ENCODE measurements at regions of chr10 and their contacts with region 1.

Region 1: DNA sequence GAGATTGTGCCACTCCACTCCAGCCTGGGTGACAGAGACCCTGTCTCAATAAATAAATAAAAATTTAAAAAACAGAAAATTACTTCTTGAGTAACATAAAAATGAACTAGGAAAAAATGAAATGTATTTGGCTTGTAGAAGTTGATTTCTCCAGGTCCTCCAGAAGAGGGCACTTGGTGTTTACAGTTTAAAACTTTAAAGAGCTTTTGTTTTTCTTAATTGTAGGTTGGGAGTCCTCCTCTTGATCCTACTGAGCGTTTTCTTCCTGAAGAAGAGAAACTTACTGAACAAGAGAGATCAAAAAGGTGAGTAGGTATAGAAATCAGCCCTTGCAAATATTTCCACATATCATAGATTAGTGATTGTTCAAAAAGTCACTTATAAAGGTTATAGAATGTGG is 16.2 kb downstream of the KIFBP start:
- DNase-seq: peak; percentile 52
- CTCF ChIP-seq: peak; percentile 56

Region 2: DNA sequence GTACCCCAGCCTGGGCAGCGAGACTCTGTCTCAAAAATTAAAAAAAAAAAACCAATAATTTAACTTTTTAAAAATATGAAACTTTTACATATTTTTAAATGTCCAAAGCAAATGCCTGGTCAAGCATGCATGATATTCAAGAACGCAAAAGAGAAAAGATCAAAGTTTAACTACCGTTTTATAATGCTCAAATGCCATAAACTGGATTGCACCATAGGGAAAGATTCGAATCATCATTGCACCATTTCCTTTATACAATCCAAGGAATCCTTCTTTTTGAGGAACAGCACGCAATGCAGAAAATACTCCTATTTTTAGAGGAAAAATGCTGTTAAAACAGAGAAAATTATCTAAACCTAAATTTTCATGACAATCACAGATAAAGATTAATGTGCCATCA is 498.4 kb before region 1 on chr10:
- CTCF ChIA-PET with region 1: no interaction called
- POLR2A ChIA-PET with region 1: no interaction called
- DNase-seq: no peak
- CTCF ChIP-seq: no peak

Region 3: GRCh38 chr10:68988530-68989316 is 16.1 kb before region 1 on chr10 and contains the start of gene KIFBP:
- CTCF ChIA-PET with region 1: interaction called, 23 read pairs
- POLR2A ChIA-PET with region 1: no interaction called
- DNase-seq: peak; percentile 95
- CTCF ChIP-seq: peak; percentile 49

Region 4: DNA sequence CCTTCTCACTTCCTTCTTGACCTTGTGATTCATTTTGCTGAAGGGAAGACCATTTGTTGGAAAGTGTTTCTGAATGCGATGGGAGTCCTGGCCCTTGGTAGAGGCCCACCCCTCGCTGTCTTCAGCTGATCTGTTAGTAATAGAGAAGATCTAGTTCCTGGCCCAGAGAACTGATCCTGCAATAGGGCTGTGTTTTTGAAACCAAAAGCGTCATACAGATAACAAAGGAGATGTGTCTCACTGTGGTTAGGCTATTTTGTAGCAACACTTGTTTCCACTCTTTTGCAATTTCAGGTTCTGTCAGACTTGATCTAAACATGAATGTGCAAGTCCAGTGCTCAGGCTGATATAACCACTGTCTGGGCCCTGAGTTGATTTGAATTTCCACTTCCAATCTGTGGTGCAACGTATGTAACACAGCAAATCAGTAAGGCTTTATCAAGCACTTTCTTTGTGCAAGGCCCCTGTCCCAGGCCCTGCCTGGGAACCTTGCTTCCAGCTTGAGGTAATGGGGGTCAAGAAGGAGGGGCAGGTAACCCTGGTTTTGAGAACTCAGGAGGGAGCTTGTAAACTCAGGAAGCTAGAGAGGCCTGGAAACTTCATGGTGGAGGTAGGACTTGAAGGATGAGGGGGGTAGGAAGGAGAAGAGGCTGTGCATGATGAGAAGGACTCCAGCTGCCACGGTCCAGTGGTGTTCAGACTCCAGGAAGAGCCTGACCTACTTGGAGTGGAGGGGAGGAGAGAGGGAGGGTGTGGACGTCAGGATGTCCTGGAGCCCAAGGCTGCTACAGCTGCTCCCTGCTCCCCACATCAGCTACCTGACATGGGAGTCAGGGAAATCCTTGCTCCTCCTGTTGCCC is 40.9 kb after region 1 on chr10:
- CTCF ChIA-PET with region 1: interaction called, 24 read pairs
- POLR2A ChIA-PET with region 1: no interaction called
- DNase-seq: peak; percentile 72
- CTCF ChIP-seq: no peak

Region 5: GRCh38 chr10:69092959-69093850 is 88.4 kb after region 1 on chr10:
- CTCF ChIA-PET with region 1: interaction called, 95 read pairs
- POLR2A ChIA-PET with region 1: interaction called, 9 read pairs
- DNase-seq: peak; percentile 64
- CTCF ChIP-seq: peak; percentile 58

Region 6: DNA sequence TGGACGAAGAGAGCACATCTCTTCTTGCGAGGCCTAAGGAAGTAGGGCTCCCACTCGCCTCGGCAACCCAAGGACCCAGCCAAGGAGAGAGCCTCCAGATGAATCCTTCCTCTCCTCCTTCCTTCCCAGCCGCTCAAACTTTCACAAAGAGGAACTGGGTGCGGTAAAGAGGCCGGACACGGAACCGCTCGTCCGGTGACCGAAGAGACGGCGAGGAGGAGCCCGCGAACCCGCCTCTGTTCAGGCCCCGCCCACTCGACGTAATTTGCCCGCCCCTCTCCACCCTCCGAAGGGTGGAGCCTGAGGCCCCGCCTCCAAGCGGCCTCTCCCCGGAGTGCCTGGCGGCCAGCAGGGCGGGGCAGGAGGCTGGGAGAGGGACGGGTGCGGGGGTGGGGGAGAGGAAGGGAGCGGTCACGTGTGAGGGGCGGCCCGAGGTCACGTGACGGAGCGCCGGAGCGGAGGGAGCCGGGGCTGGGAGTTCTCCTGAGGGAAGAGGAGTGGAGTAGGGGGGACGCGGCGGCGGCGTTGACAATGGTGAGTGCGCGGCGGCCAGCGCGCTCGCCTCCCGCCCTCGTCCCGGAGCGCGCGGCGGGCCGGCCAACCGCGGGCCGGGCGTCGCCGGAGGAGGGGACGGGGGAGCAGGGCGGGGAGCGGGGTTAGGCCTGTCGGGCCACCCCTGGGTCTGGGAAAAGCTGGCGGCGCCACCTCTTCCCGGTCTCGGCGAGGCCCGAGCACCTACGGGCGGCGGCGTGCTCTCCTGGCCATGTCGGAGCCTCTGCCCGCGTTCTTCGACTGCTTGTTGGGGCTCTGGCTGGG is 119.1 kb after region 1 on chr10 and contains the start of gene VPS26A:
- CTCF ChIA-PET with region 1: interaction called, 13 read pairs
- POLR2A ChIA-PET with region 1: no interaction called
- DNase-seq: peak; percentile 100
- CTCF ChIP-seq: peak; percentile 66

Region 7: GRCh38 chr10:69242852-69243212 is 238.0 kb after region 1 on chr10:
- CTCF ChIA-PET with region 1: no interaction called
- POLR2A ChIA-PET with region 1: no interaction called
- DNase-seq: no peak
- CTCF ChIP-seq: no peak

Measured in GM10248 (cell line).